ENCODE measurements at regions of chr17 and their contacts with region 1.

Region 1: DNA sequence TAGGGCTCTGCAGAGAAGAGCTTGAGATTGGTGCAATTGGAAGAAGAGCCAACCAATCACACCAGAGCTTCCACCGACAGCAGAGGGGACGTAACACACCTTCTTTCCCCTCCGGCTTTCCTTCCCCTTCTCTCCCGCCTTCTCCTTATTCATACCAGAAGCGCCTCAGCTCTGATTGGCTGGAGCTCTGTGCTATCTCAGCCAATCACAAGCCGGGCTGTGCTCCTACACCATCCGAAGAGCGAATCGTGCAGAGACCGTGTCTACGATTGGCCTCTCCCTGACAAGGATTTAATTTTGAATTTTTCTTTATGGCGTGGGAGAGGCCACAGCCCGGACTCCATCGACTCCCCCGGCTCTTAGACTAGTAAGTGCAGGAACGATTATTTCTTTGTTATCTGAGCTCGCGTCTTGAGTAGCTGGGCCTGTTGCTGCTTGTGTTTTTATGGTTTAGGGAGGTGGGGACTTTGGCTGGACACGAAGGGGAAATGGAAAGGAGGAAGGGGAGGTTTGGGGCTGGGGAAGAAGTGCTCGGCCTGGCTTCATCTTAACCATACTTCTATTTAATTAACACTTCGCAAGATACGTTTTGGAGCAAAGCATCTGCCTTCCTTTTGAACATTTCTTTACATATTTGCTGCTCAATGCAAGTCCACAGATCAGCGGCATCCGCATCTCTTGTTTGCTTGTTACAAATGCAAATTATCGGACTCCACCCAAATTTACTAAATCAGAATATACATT is at the start of gene PRR11:
- DNase-seq: peak; percentile 100
- ATAC-seq: peak; percentile 94
- H3K4me3 ChIP-seq: peak within 1 kb of the TSS; percentile 83 to 95 (median 89)
- H3K27ac ChIP-seq: peak within 1 kb of the TSS; percentile 95
- H3K4me1 ChIP-seq: peaks cover 60% of the 10 kb centered on the region
- H3K27me3 ChIP-seq: no peaks in the 10 kb centered on the region; a peak in 1 of 5 replicates
- CTCF ChIP-seq: no peak
- EP300 ChIP-seq: no peak
- POLR2A ChIP-seq: peak in 1 of 2 experiments; percentile 66; a peak in 2 of 4 replicates
- RAD21 ChIP-seq: no peak
- total RNA-seq, gene PRR11: 39.2 and 50.4 TPM in 2 replicates

Region 2: DNA sequence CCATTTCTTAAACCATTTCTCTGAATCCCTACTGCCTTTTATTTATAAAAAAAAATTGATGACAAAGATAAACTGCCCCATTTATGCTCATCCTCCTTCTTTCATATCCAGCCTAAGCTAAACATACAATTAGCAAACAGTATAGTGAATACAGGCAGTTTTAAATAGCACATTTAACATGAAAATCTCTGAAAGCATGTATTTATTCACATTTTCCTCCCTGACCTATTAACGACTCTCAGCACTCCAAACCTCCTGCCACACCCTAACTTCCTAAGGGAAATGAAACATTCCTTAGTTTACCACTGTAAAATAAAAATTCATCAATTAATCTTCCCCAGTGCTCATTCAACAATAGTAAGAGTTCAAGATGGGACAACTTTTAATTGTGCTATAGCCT is 105.8 kb before region 1 on chr17:
- CTCF ChIA-PET with region 1: no interaction called
- POLR2A ChIA-PET with region 1: no interaction called
- in situ Hi-C with region 1: no loop called
- intact Hi-C with region 1: no loop called
- DNase-seq: no peak
- ATAC-seq: no peak
- H3K4me3 ChIP-seq: no peak overlapping the region
- H3K27ac ChIP-seq: no peak overlapping the region
- H3K4me1 ChIP-seq: no peaks in the 10 kb centered on the region
- H3K27me3 ChIP-seq: no peaks in the 10 kb centered on the region
- CTCF ChIP-seq: no peak
- EP300 ChIP-seq: no peak
- POLR2A ChIP-seq: no peak
- RAD21 ChIP-seq: no peak

Region 3: DNA sequence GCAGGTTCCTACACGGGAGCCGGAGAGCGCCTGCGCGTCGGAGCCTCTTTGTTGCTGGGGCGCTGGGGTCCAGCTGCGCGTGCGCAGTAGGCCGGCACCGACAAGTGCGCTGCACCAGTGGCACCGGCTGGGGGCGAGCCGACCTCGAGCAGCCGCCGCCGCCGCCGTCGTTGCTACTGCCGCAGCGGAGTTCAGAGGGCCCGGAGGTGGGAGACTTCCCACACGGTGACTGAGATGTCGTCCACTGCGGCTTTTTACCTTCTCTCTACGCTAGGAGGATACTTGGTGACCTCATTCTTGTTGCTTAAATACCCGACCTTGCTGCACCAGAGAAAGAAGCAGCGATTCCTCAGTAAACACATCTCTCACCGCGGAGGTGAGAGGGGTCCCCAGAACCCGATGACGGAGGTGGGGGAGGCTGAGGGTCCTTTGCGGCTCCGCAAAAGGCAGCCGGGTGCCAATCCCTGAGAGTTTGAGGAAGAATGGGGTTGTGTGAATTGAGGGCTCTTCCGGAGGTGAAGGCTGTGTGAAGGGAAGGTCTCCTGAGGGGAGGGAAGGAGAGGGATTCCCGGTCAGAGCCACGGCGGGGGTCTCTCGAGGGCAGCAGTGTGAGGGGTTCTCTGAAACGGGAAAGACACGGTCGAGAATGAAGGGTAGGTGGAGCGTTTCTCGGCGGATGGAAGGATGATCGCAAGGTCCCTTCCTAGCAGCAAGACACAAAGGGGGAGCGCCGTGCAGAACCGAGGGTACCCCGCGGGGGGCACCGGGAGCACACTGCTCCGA is 65.0 kb after region 1 on chr17 and contains the start of gene GDPD1:
- CTCF ChIA-PET with region 1: no interaction called
- POLR2A ChIA-PET with region 1: interaction called, 5 read pairs
- in situ Hi-C with region 1: no loop called
- intact Hi-C with region 1: loop called (anchors 1 kb)
- DNase-seq: peak; percentile 94
- ATAC-seq: peak; percentile 97
- H3K4me3 ChIP-seq: peak within 1 kb of the TSS; percentile 87 to 96 (median 92)
- H3K27ac ChIP-seq: peak within 1 kb of the TSS; percentile 70
- H3K4me1 ChIP-seq: peaks cover 24% of the 10 kb centered on the region
- H3K27me3 ChIP-seq: peaks cover 0 to 4% of the 10 kb centered on the region in 2 experiments; a peak in 1 of 5 replicates
- CTCF ChIP-seq: peak; percentile 97
- EP300 ChIP-seq: no peak
- POLR2A ChIP-seq: peak; percentile 64 to 66; a peak in 3 of 4 replicates
- RAD21 ChIP-seq: peak; percentile 96
- total RNA-seq, gene GDPD1: 3.8 and 7.7 TPM in 2 replicates